Activated CD4-positive, alpha-beta T cell treated with anti-CD3 and anti-CD28 coated beads for 36 hours (primary cell): ENCODE measurements at regions of chr17 and their contacts with region 1.

Region 1: GRCh38 chr17:59521204-59522126 is 43.9 kb upstream of the DHX40 start:
- DNase-seq: peak; percentile 80
- ATAC-seq: peak; percentile 85
- H3K4me3 Mint-ChIP-seq: no peak overlapping the region
- H3K27ac Mint-ChIP-seq: no peak overlapping the region
- H3K4me1 Mint-ChIP-seq: peaks cover 4% of the 10 kb centered on the region
- H3K27me3 Mint-ChIP-seq: peaks cover 9% of the 10 kb centered on the region

Region 2: GRCh38 chr17:59533717-59534116 is 12.3 kb after region 1 on chr17:
- CTCF ChIA-PET with region 1: interaction called, 24 read pairs
- POLR2A ChIA-PET with region 1: no interaction called
- intact Hi-C with region 1: no loop called
- DNase-seq: no peak
- ATAC-seq: no peak
- H3K4me3 Mint-ChIP-seq: no peak overlapping the region
- H3K27ac Mint-ChIP-seq: no peak overlapping the region
- H3K4me1 Mint-ChIP-seq: no peaks in the 10 kb centered on the region
- H3K27me3 Mint-ChIP-seq: peaks cover 6% of the 10 kb centered on the region

Region 3: GRCh38 chr17:59558977-59559376 is 37.5 kb after region 1 on chr17:
- CTCF ChIA-PET with region 1: interaction called, 12 read pairs
- POLR2A ChIA-PET with region 1: no interaction called
- intact Hi-C with region 1: no loop called
- DNase-seq: no peak
- ATAC-seq: no peak
- H3K4me3 Mint-ChIP-seq: no peak overlapping the region
- H3K27ac Mint-ChIP-seq: no peak overlapping the region
- H3K4me1 Mint-ChIP-seq: no peaks in the 10 kb centered on the region
- H3K27me3 Mint-ChIP-seq: no peaks in the 10 kb centered on the region

Region 4: GRCh38 chr17:59565171-59565969 is 43.9 kb after region 1 on chr17 and contains the start of gene DHX40:
- CTCF ChIA-PET with region 1: interaction called, 12 read pairs
- POLR2A ChIA-PET with region 1: no interaction called
- intact Hi-C with region 1: loop called in 1 of 2 experiments (anchors 1 kb)
- DNase-seq: peak; percentile 98
- ATAC-seq: peak; percentile 89
- H3K4me3 Mint-ChIP-seq: peak within 1 kb of the TSS; percentile 99
- H3K27ac Mint-ChIP-seq: peak within 1 kb of the TSS; percentile 99
- H3K4me1 Mint-ChIP-seq: peaks cover 20% of the 10 kb centered on the region
- H3K27me3 Mint-ChIP-seq: no peaks in the 10 kb centered on the region
- total RNA-seq, gene DHX40: 22.9 to 24.1 TPM

Region 5: GRCh38 chr17:59607817-59608403 is 86.4 kb after region 1 on chr17:
- CTCF ChIA-PET with region 1: no interaction called
- POLR2A ChIA-PET with region 1: no interaction called
- intact Hi-C with region 1: loop called in 1 of 2 experiments (anchors 5 kb)
- DNase-seq: peak; percentile 68
- ATAC-seq: no peak
- H3K4me3 Mint-ChIP-seq: no peak overlapping the region
- H3K27ac Mint-ChIP-seq: no peak overlapping the region
- H3K4me1 Mint-ChIP-seq: no peaks in the 10 kb centered on the region
- H3K27me3 Mint-ChIP-seq: no peaks in the 10 kb centered on the region

Region 6: GRCh38 chr17:59734226-59734625 is 212.8 kb after region 1 on chr17:
- CTCF ChIA-PET with region 1: no interaction called
- POLR2A ChIA-PET with region 1: no interaction called
- intact Hi-C with region 1: loop called in 1 of 2 experiments (anchors 5 kb)
- DNase-seq: no peak
- ATAC-seq: no peak
- H3K4me3 Mint-ChIP-seq: no peak overlapping the region
- H3K27ac Mint-ChIP-seq: no peak overlapping the region
- H3K4me1 Mint-ChIP-seq: peaks cover 8% of the 10 kb centered on the region
- H3K27me3 Mint-ChIP-seq: no peaks in the 10 kb centered on the region